Posterior cingulate gyrus (tissue), 11 donors: ENCODE measurements at regions of chr21 and their contacts with region 1.

Region 1: GRCh38 chr21:35048706-35049617 is at the start of gene RUNX1:
- DNase-seq: no peak

Region 2: DNA sequence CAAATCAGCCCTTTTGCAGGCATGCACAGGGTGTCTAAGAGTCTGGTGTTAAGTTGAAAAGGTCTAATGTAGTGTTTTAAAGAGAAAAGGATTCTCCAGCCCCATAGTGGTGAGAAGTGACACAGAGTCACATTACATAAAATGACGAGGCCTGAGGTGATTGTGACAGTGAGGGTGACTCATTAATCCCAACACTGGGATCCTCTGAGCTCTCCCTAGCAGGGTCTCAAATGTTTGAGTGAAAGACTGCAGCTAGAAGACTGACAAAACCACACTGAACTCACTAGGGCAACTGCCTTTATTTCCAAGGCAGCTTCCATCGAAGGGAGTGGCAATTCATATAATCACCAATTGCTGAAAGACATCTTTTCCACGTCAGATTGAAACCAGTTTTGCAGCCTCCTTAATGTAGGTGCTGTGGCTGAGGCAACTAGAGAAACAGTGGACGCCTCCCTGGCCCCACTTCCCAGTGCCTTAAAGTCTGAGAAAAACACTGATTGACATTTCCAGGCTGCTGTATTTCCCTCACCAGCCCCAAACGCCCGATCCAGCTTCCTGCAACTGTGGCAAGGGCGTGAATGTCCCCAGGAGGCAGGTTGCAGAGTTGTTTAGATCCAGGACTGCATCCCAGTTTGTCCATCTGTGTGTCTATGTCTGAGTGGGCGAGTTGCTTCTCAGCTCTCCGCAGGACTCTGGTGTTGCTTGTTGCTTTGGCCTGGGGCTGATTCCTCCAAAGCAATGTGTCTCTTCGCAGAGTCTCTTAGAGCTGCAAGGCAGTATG is 81.3 kb before region 1 on chr21:
- intact Hi-C with region 1: no loop called
- DNase-seq: no peak

Region 3: DNA sequence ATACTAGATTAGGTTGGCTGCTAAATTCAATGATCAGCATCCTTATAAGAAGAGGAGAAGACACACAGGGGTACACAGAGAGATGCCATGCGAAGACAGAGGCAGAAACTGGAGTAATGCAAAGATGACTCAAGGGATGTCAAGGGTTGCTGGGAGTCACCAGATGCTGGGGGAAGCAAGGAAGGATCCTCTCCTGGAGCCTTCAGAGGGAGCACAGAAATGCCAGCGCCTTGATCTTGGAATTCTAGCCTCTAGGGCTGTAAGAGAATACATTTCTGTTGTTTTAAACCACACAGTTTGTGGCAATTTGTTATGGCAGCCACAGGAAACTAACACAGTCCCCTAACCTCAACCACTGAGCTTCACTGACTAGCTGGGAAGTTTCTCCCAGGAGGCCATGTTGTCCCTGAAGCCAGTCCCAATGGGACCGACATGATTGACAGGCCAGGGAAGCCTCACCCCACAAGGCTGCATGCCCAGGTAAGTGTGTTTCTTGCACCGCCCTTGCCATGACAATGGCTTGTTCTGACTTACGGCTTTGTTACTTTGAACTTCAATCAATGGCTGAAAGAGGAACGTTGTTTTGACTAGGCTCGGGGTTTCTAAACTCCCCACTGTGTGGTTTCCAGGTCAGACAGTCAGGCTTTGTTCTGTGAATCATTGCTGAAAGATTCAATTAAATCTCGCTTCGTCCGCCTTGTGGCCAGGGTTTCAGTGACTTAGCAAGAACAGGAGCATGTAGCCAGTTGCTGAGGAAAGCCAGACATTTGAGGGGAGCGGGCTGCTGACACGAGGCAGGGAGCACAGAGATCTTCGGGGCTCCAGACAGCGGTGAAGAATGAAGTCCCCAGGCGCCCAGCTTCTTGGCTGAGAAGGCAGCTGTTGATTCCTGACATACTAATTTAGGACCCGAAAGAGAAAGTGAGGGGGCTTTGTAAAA is 62.1 kb before region 1 on chr21:
- intact Hi-C with region 1: loop called (anchors 10 kb)
- DNase-seq: no peak